Naive thymus-derived CD4-positive, alpha-beta T cell (primary cell): ENCODE measurements at regions of chr18 and their contacts with region 1.

Region 1: GRCh38 chr18:28984731-28985130 is 807.8 kb upstream of the CDH2 start:
- DNase-seq: no peak
- ATAC-seq: no peak
- H3K4me3 ChIP-seq: no peak overlapping the region
- H3K4me3 Mint-ChIP-seq: no peak overlapping the region
- H3K27ac ChIP-seq: no peak overlapping the region
- H3K27ac Mint-ChIP-seq: no peak overlapping the region
- H3K4me1 ChIP-seq: no peaks in the 10 kb centered on the region
- H3K4me1 Mint-ChIP-seq: no peaks in the 10 kb centered on the region
- H3K27me3 ChIP-seq: no peaks in the 10 kb centered on the region
- H3K27me3 Mint-ChIP-seq: no peaks in the 10 kb centered on the region

Region 2: GRCh38 chr18:28411806-28412205 is 572.9 kb before region 1 on chr18:
- CTCF ChIA-PET with region 1: no interaction called
- POLR2A ChIA-PET with region 1: no interaction called
- intact Hi-C with region 1: no loop called
- DNase-seq: no peak
- ATAC-seq: no peak
- H3K4me3 ChIP-seq: no peak overlapping the region
- H3K4me3 Mint-ChIP-seq: peak overlapping the region in 1 of 10 donors; percentile 9
- H3K27ac ChIP-seq: no peak overlapping the region
- H3K27ac Mint-ChIP-seq: no peak overlapping the region
- H3K4me1 ChIP-seq: no peaks in the 10 kb centered on the region
- H3K4me1 Mint-ChIP-seq: no peaks in the 10 kb centered on the region
- H3K27me3 ChIP-seq: no peaks in the 10 kb centered on the region
- H3K27me3 Mint-ChIP-seq: no peaks in the 10 kb centered on the region

Region 3: GRCh38 chr18:28725876-28726275 is 258.9 kb before region 1 on chr18:
- CTCF ChIA-PET with region 1: no interaction called
- POLR2A ChIA-PET with region 1: no interaction called
- intact Hi-C with region 1: no loop called
- DNase-seq: no peak
- ATAC-seq: no peak
- H3K4me3 ChIP-seq: no peak overlapping the region
- H3K4me3 Mint-ChIP-seq: no peak overlapping the region
- H3K27ac ChIP-seq: no peak overlapping the region
- H3K27ac Mint-ChIP-seq: no peak overlapping the region
- H3K4me1 ChIP-seq: no peaks in the 10 kb centered on the region
- H3K4me1 Mint-ChIP-seq: no peaks in the 10 kb centered on the region
- H3K27me3 ChIP-seq: no peaks in the 10 kb centered on the region
- H3K27me3 Mint-ChIP-seq: no peaks in the 10 kb centered on the region

Region 4: DNA sequence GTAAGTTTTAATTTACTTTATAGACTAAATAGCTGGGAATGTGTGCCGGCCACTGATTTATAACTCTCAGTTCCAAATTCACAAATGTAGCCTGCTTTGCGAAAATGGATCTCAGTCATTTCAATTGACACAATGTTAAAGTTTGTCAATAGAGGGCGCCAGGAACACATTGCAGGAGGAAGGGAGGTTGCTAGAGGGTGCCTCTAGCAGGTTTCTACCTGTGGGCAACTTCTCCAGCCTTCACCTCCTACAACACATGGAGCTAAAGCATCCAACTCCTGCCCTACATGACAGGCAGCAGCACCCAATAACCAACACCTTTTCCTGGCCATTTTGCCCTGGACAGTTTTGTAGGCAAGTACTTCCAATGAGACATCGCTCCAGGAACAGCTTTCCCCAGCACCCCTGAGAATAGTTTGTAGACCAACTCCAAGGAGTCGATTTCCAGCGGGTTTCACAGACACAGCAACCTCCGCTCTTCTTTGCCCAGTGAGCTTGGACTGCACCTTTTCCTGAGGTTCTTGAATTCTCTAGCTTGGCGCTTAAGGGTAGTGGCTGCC is 23.0 kb before region 1 on chr18:
- CTCF ChIA-PET with region 1: no interaction called
- POLR2A ChIA-PET with region 1: no interaction called
- intact Hi-C with region 1: loop called in 1 of 2 experiments (anchors 2 kb)
- DNase-seq: no peak
- ATAC-seq: no peak
- H3K4me3 ChIP-seq: no peak overlapping the region
- H3K4me3 Mint-ChIP-seq: no peak overlapping the region
- H3K27ac ChIP-seq: no peak overlapping the region
- H3K27ac Mint-ChIP-seq: no peak overlapping the region
- H3K4me1 ChIP-seq: no peaks in the 10 kb centered on the region
- H3K4me1 Mint-ChIP-seq: no peaks in the 10 kb centered on the region
- H3K27me3 ChIP-seq: no peaks in the 10 kb centered on the region
- H3K27me3 Mint-ChIP-seq: no peaks in the 10 kb centered on the region

Region 5: GRCh38 chr18:28995319-28995718 is 10.6 kb after region 1 on chr18:
- CTCF ChIA-PET with region 1: no interaction called
- POLR2A ChIA-PET with region 1: no interaction called
- intact Hi-C with region 1: no loop called
- DNase-seq: no peak
- ATAC-seq: no peak
- H3K4me3 ChIP-seq: no peak overlapping the region
- H3K4me3 Mint-ChIP-seq: no peak overlapping the region
- H3K27ac ChIP-seq: no peak overlapping the region
- H3K27ac Mint-ChIP-seq: no peak overlapping the region
- H3K4me1 ChIP-seq: no peaks in the 10 kb centered on the region
- H3K4me1 Mint-ChIP-seq: no peaks in the 10 kb centered on the region
- H3K27me3 ChIP-seq: no peaks in the 10 kb centered on the region
- H3K27me3 Mint-ChIP-seq: no peaks in the 10 kb centered on the region